ENCODE measurements at regions of chr1 and their contacts with region 1.

Region 1: DNA sequence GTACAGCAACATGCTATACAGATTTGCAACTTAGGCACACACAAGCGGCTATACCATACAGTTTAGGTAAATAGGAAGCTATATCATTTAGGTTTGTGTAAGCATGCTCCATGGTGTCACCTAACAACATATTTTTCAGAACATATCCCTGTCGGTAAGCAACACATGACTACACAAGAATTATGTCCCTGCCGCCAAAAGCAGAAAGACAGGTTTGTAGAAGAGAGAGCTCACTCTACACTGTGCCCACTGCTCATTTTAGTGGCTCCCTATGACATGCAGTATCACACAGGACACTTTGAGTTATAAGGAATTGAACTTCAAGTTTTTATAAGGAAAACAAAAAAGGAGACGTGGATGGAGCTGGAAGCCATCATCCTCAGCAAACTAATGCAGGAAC is 132.5 kb upstream of the KAZN start:
- DNase-seq: no peak
- H3K4me3 ChIP-seq: no peak overlapping the region
- H3K27ac ChIP-seq: no peak overlapping the region
- H3K4me1 ChIP-seq: no peaks in the 10 kb centered on the region
- H3K27me3 ChIP-seq: no peaks in the 10 kb centered on the region
- CTCF ChIP-seq: no peak

Region 2: DNA sequence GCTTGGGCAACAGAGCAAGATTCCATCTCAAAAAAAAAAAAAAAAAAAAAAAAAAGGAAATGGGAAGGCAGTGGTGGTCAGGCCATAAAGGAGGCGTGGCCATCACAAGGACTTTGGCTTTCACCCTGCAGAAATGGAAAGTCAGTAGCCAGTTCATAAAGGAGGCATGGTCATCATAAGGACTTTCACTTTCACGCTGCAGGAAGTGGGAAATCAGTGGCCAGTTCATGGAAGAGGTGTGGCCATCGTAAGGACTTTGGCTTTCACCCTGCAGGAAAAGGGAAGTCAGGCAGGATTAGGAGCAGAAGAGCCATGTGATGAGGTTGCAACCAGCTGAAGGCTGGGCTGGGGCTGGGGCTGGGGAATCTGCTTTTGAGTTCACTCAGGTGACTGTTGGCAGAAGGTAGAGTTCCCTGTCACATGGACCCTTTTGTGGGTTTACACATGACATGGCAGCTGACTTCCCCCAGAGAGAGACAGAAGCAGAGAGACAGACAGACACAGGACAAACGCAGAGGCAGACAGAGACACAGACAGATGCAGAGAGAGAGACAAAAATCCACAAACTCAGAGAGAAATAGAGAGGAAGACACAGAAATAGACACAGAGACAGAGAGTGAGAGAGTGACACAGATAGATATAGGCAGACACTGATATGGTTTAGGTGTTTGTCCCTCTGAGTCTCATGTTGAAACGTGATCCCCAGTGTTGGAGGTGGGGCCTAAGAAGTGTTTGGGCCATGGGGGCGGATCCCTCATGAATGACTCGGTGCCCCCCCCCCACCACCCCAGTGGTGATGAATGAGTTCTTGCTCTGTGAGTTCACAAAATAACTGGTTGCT is 131.4 kb before region 1 on chr1:
- CTCF ChIA-PET with region 1: no interaction called
- POLR2A ChIA-PET with region 1: no interaction called
- intact Hi-C with region 1: no loop called
- DNase-seq: peak; percentile 5
- H3K4me3 ChIP-seq: no peak overlapping the region
- H3K27ac ChIP-seq: no peak overlapping the region
- H3K4me1 ChIP-seq: no peaks in the 10 kb centered on the region
- H3K27me3 ChIP-seq: no peaks in the 10 kb centered on the region
- CTCF ChIP-seq: no peak

Region 3: GRCh38 chr1:14634486-14634885 is 168.5 kb after region 1 on chr1:
- CTCF ChIA-PET with region 1: no interaction called
- POLR2A ChIA-PET with region 1: interaction called, 13 read pairs
- intact Hi-C with region 1: no loop called
- DNase-seq: no peak
- H3K4me3 ChIP-seq: no peak overlapping the region
- H3K27ac ChIP-seq: no peak overlapping the region
- H3K4me1 ChIP-seq: no peaks in the 10 kb centered on the region
- H3K27me3 ChIP-seq: no peaks in the 10 kb centered on the region
- CTCF ChIP-seq: no peak